Activated CD8-positive, alpha-beta memory T cell treated with anti-CD3 and anti-CD28 coated beads, Interleukin-2, amount 10 ng/mL, durations not matched to agents 7 days and 5 days (primary cell): ENCODE measurements at regions of chr5 and their contacts with region 1.

Region 1: DNA sequence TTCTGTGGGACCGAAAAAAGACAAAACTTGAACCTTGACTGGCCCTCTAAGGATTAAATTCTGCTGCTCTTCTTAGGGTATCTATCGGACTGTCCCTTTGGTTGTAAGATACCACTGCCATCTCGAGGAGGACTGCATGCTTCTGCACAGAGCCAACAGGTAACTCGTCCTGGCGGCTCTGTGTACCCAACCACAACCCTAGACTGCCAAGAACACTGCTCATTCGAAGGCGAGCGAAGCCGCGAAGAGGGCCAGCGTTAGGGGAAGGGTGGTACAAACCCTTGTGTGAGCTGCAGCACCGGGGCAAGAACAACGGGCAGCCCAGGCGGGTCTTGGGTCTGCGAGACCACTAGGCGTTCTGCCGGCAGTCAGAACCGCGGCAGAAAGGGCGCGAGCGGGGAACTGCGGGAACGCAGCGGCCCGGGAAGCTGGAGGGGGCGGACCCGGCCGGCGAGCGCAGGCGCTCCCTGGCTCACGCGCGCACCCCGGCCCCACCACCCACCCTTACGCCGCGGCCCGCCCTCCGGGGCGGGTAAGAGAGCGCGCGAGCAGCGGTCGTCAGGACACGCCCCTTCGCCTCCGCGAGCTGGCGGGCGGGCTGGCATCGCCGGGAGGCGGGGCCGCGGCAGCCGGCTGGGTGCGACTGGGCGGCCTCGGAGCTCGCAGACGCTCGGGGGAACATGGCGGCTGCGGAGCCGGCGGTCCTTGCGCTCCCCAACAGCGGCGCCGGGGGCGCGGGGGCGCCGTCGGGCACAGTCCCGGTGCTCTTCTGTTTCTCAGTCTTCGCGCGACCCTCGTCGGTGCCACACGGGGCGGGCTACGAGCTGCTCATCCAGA is at the start of gene ISOC1:
- DNase-seq: peak; percentile 92
- ATAC-seq: peak; percentile 95
- H3K4me3 Mint-ChIP-seq: peak within 1 kb of the TSS; percentile 84
- H3K27ac Mint-ChIP-seq: peak within 1 kb of the TSS; percentile 77
- H3K4me1 Mint-ChIP-seq: peaks cover 28% of the 10 kb centered on the region
- H3K27me3 Mint-ChIP-seq: peaks cover 27% of the 10 kb centered on the region
- total RNA-seq, gene ISOC1: 15.5 to 21.4 TPM

Region 2: GRCh38 chr5:129125810-129126209 is 31.5 kb after region 1 on chr5:
- CTCF ChIA-PET with region 1: interaction called, 51 read pairs
- DNase-seq: no peak
- ATAC-seq: peak; percentile 76
- H3K4me3 Mint-ChIP-seq: peak overlapping the region; percentile 65
- H3K27ac Mint-ChIP-seq: peak overlapping the region; percentile 91
- H3K4me1 Mint-ChIP-seq: peaks cover 10% of the 10 kb centered on the region
- H3K27me3 Mint-ChIP-seq: no peaks in the 10 kb centered on the region